ENCODE measurements at regions of chr17 and their contacts with region 1.

Region 1: GRCh38 chr17:47889734-47890529 is 6.1 kb upstream of the SP2 start:
- DNase-seq: peak; percentile 97
- H3K4me3 ChIP-seq: no peak overlapping the region
- H3K27ac ChIP-seq: no peak overlapping the region
- H3K4me1 ChIP-seq: peaks cover 11 to 18% (median 13%) of the 10 kb centered on the region in 4 donors
- H3K27me3 ChIP-seq: peaks cover 0 to 6% (median 0%) of the 10 kb centered on the region in 4 donors
- CTCF ChIP-seq: peak in 2 of 3 experiments; percentile 90 to 96
- EP300 ChIP-seq: no peak
- POLR2A ChIP-seq: no peak

Region 2: GRCh38 chr17:47733047-47733673 is 156.8 kb before region 1 on chr17 and contains the start of gene TBX21:
- intact Hi-C with region 1: no loop called
- DNase-seq: no peak
- H3K4me3 ChIP-seq: peak within 1 kb of the TSS; percentile 50 to 59 (median 52)
- H3K27ac ChIP-seq: no peak within 1 kb of the TSS
- H3K4me1 ChIP-seq: peaks cover 3 to 16% (median 14%) of the 10 kb centered on the region in 4 donors
- H3K27me3 ChIP-seq: peaks cover 0 to 87% (median 23%) of the 10 kb centered on the region in 4 donors
- CTCF ChIP-seq: peak in 1 of 3 experiments; percentile 12
- EP300 ChIP-seq: no peak
- POLR2A ChIP-seq: no peak
- total RNA-seq, gene TBX21: 0.42 to 2.2 (median 0.61) TPM

Region 3: GRCh38 chr17:47941236-47941994 is 51.5 kb after region 1 on chr17 and contains the start of gene PNPO:
- intact Hi-C with region 1: loop called (anchors 5 kb)
- DNase-seq: peak; percentile 99
- H3K4me3 ChIP-seq: peak within 1 kb of the TSS; percentile 77 to 97 (median 90)
- H3K27ac ChIP-seq: peak within 1 kb of the TSS; percentile 81 to 88 (median 87)
- H3K4me1 ChIP-seq: peaks cover 19 to 47% (median 33%) of the 10 kb centered on the region in 4 donors
- H3K27me3 ChIP-seq: no peaks in the 10 kb centered on the region
- CTCF ChIP-seq: peak in 1 of 3 experiments; percentile 2
- EP300 ChIP-seq: no peak
- POLR2A ChIP-seq: no peak
- total RNA-seq, gene PNPO: 21.2 to 32.8 (median 27.6) TPM

Measured in esophagus muscularis mucosa (tissue), 4 donors.